ENCODE measurements at regions of chr12 and their contacts with region 1.

Region 1: GRCh38 chr12:1517007-1517406 is 77.4 kb downstream of the FBXL14 start:
- DNase-seq: peak; percentile 10
- ATAC-seq: peak; percentile 47; the same call in 1 of the 3 replicates
- H3K4me3 ChIP-seq: no peak overlapping the region
- H3K27ac ChIP-seq: no peak overlapping the region
- H3K4me1 ChIP-seq: peaks cover 24% of the 10 kb centered on the region
- H3K27me3 ChIP-seq: no peaks in the 10 kb centered on the region; a peak in 1 of 5 replicates
- CTCF ChIP-seq: peak; percentile 47
- EP300 ChIP-seq: no peak
- POLR2A ChIP-seq: no peak
- RAD21 ChIP-seq: no peak

Region 2: GRCh38 chr12:1583421-1584078 is 66.5 kb after region 1 on chr12:
- CTCF ChIA-PET with region 1: no interaction called
- POLR2A ChIA-PET with region 1: no interaction called
- in situ Hi-C with region 1: no loop called
- intact Hi-C with region 1: loop called (anchors 1 kb)
- DNase-seq: peak; percentile 72
- ATAC-seq: peak; percentile 69
- H3K4me3 ChIP-seq: no peak overlapping the region
- H3K27ac ChIP-seq: no peak overlapping the region
- H3K4me1 ChIP-seq: peaks cover 24% of the 10 kb centered on the region
- H3K27me3 ChIP-seq: peaks cover 7 to 18% of the 10 kb centered on the region in 2 experiments; a peak in 3 of 5 replicates
- CTCF ChIP-seq: peak; percentile 91
- EP300 ChIP-seq: no peak
- POLR2A ChIP-seq: no peak
- RAD21 ChIP-seq: peak; percentile 79

Region 3: DNA sequence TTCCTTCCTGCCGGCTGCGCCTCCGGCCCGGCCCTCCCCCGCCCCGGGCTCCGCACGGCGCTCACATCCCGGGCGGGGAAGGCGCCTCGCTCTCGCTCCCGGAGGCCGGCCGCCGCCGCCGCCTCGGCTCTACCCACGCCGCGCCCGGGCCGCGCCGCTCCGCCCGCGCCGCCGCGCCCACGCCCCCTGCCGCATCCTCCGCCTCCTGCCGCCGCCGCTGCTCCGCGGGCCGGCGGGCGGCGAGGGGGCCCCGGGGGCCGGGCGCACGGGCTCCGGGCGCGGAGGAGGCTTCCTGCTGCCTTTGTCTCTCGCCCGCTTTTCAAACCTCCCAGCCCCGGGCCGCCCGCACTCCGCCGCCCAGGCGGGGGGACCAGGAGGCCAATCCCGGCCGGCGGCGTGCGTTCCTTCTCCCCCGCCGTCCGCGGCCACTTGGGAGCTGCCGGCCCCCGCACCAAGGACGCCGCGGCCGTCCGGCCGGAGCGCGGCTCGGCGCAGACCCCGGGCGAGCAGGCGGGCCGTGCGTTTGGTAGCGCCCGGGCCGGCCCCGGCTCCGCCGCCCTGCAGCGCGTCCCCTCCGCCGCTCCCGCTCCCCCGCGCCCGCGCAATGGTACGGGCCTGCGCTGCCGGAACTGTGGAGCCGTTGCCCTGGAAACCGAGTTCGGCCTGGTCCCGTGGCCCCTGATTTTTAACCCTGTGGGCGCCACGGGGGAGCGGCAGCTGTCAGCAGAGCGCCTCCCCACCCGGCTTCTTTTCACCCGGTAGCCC is 77.4 kb after region 1 on chr12 and contains the start of gene FBXL14:
- CTCF ChIA-PET with region 1: no interaction called
- POLR2A ChIA-PET with region 1: no interaction called
- in situ Hi-C with region 1: loop called (anchors 5 kb)
- intact Hi-C with region 1: no loop called
- DNase-seq: peak; percentile 74
- ATAC-seq: peak; percentile 82
- H3K4me3 ChIP-seq: peak within 1 kb of the TSS; percentile 66 to 83 (median 75)
- H3K27ac ChIP-seq: peak within 1 kb of the TSS; percentile 73
- H3K4me1 ChIP-seq: peaks cover 52% of the 10 kb centered on the region
- H3K27me3 ChIP-seq: peaks cover 0 to 4% of the 10 kb centered on the region in 2 experiments; a peak in 2 of 5 replicates
- CTCF ChIP-seq: peak; percentile 34
- EP300 ChIP-seq: 0 out of 4 replicates have a peak, but pooled peaks of 1 of the 2 experiments have one; percentile 12
- POLR2A ChIP-seq: no peak; a peak in 1 of 4 replicates
- RAD21 ChIP-seq: peak; percentile 47
- total RNA-seq, gene FBXL14: 5.5 and 7.0 TPM in 2 replicates